Activated naive CD4-positive, alpha-beta T cell treated with anti-CD3 and anti-CD28 coated beads for 36 hours (primary cell): ENCODE measurements at regions of chr17 and their contacts with region 1.

Region 1: GRCh38 chr17:7484067-7484918 is at the start of gene POLR2A:
- DNase-seq: peak; percentile 95
- H3K4me3 Mint-ChIP-seq: peak within 1 kb of the TSS; percentile 93
- H3K27ac Mint-ChIP-seq: peak within 1 kb of the TSS; percentile 100
- H3K4me1 Mint-ChIP-seq: peaks cover 70% of the 10 kb centered on the region
- H3K27me3 Mint-ChIP-seq: no peaks in the 10 kb centered on the region
- total RNA-seq, gene POLR2A: 204 to 205 TPM

Region 2: DNA sequence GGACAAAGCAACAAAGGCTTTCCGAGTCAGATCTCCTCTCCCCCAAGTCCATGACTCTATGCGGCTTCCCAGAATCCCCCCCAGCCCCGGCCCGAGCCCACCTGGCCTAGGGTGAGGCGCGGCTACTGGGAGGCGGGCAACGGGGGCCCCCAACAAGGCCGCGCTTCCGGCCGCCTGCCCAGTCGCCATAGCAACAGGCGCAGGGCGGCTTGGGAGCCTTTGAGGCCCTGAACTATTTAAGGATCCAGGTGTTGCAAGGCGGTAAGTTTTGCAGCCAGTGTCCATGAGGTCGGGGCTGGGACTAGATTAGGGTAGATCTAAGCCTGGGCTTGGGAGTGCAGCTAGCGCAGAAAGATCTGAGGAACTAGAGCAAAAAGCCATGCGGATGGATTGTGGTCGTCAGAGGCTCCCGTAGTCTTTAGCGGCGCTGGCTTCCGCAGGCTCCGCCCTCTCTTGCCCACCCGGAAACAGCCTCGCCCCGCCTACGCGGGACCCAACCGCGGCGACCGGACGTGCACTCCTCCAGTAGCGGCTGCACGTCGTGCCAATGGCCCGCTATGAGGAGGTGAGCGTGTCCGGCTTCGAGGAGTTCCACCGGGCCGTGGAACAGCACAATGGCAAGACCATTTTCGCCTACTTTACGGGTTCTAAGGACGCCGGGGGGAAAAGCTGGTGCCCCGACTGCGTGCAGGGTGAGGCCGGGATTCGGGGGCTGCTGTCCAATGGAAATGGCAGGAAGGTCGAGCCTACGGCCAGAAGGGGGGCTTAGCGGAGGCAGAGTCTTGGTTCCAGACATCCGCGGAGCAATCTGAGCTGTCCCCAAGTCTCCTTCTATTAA is 843.5 kb before region 1 on chr17 and contains the starts of genes KIAA0753 and TXNDC17:
- CTCF ChIA-PET with region 1: no interaction called
- intact Hi-C with region 1: loop called (anchors 5 kb)
- DNase-seq: peak; percentile 93
- H3K4me3 Mint-ChIP-seq: peak within 1 kb of the TSS; percentile 81
- H3K27ac Mint-ChIP-seq: peak within 1 kb of the TSS; percentile 97
- H3K4me1 Mint-ChIP-seq: peaks cover 51% of the 10 kb centered on the region
- H3K27me3 Mint-ChIP-seq: no peaks in the 10 kb centered on the region
- total RNA-seq, gene KIAA0753: 7.7 to 8.1 TPM
- total RNA-seq, gene TXNDC17: 71.4 to 85.8 TPM

Region 3: DNA sequence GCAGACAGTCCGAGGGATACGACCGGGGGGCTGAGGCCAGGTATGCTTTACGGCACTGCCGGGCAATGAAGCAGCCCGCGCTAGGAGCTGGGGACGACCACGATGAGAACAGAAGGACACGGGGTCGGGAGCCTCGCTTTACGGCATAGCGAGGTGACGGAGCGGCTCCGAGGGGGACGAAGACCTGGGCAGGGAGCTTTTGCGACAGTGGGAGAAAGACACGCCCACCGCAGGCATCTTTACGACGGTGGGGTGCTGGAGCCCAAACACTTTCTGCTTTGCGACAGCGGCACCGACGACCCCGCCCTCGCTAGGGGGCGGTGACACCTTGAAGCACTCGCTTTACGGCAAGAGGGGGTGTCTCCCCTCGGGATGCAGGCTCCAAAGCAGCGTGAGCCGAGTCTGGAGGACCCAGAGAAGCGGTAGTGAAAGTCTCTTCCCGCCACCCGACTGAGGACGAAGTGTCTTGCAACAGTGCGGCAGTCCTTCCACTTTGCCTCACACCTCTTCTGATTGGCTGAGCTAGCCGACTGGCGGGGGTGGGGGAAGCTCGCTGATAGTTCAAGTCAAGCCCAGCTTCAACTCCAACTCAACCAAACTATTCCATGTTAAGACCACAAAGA is 154.8 kb before region 1 on chr17:
- CTCF ChIA-PET with region 1: no interaction called
- intact Hi-C with region 1: loop called (anchors 5 kb)
- DNase-seq: peak; percentile 98
- H3K4me3 Mint-ChIP-seq: peak overlapping the region; percentile 97
- H3K27ac Mint-ChIP-seq: peak overlapping the region; percentile 91
- H3K4me1 Mint-ChIP-seq: peaks cover 54% of the 10 kb centered on the region
- H3K27me3 Mint-ChIP-seq: no peaks in the 10 kb centered on the region

Region 4: DNA sequence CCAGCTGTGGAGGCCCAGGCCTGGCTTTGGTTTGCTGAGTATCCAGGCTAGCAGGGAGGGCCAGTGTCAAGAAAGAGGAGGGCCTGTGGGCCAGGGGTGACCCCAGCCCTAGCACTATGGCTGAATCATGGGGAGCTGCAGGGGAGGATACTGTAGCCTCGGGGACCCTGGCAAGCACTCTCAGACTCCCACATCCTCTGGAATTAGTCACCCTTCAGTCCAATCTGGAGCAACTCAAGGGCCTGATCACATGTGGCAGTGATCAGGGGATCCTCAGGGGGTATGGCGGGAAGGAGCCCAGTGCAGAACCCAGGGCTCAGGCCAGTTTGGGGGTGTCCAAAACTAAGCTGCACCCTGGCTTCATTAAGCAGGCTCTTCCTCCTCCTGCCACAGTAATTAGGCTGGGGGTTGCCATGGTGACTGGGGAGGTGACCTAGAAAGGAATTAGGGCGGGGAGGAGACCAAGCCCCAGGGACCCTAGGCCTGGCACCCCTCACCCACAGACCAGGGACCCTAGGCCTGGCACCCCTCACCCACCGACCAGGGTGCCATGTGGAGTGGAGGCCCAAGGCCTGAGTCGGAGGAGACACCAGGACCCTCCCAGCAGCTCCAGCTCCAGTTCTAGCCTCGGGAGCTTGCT is 70.8 kb before region 1 on chr17:
- CTCF ChIA-PET with region 1: no interaction called
- intact Hi-C with region 1: no loop called
- DNase-seq: no peak
- H3K4me3 Mint-ChIP-seq: no peak overlapping the region
- H3K27ac Mint-ChIP-seq: no peak overlapping the region
- H3K4me1 Mint-ChIP-seq: no peaks in the 10 kb centered on the region
- H3K27me3 Mint-ChIP-seq: no peaks in the 10 kb centered on the region

Region 5: GRCh38 chr17:7454980-7455379 is 29.3 kb before region 1 on chr17:
- CTCF ChIA-PET with region 1: interaction called, 4 read pairs
- intact Hi-C with region 1: loop called (anchors 1 kb)
- DNase-seq: no peak
- H3K4me3 Mint-ChIP-seq: peak overlapping the region; percentile 84
- H3K27ac Mint-ChIP-seq: peak overlapping the region; percentile 83
- H3K4me1 Mint-ChIP-seq: peaks cover 17% of the 10 kb centered on the region
- H3K27me3 Mint-ChIP-seq: no peaks in the 10 kb centered on the region

Region 6: DNA sequence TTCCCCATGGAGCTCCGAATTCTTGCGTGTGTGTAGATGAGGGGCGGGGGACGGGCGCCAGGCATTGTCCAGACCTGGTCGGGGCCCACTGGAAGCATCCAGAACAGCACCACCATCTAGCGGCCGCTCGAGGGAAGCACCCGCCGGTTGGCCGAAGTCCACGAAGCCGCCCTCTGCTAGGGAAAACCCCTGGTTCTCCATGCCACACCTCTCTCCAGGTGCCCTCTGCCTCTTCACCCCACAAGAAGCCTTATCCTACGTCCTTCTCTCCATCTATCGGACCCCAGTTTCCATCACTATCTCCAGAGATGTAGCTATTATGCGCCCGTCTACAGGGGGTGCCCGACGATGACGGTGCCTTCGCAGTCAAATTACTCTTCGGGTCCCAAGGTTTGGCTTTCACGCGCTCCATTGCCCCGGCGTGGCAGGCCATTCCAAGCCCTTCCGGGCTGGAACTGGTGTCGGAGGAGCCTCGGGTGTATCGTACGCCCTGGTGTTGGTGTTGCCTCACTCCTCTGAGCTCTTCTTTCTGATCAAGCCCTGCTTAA is 76.8 kb after region 1 on chr17:
- CTCF ChIA-PET with region 1: interaction called, 16 read pairs
- intact Hi-C with region 1: loop called (anchors 1 kb)
- DNase-seq: peak; percentile 89
- H3K4me3 Mint-ChIP-seq: peak overlapping the region; percentile 87
- H3K27ac Mint-ChIP-seq: peak overlapping the region; percentile 84
- H3K4me1 Mint-ChIP-seq: peaks cover 57% of the 10 kb centered on the region
- H3K27me3 Mint-ChIP-seq: no peaks in the 10 kb centered on the region

Region 7: GRCh38 chr17:7782237-7782636 is 297.9 kb after region 1 on chr17:
- CTCF ChIA-PET with region 1: no interaction called
- intact Hi-C with region 1: no loop called
- DNase-seq: no peak
- H3K4me3 Mint-ChIP-seq: no peak overlapping the region
- H3K27ac Mint-ChIP-seq: no peak overlapping the region
- H3K4me1 Mint-ChIP-seq: no peaks in the 10 kb centered on the region
- H3K27me3 Mint-ChIP-seq: peaks cover 2% of the 10 kb centered on the region

Region 8: GRCh38 chr17:7834962-7835813 is 350.9 kb after region 1 on chr17:
- CTCF ChIA-PET with region 1: no interaction called
- intact Hi-C with region 1: loop called (anchors 2 kb)
- DNase-seq: peak; percentile 94
- H3K4me3 Mint-ChIP-seq: peak overlapping the region; percentile 93
- H3K27ac Mint-ChIP-seq: peak overlapping the region; percentile 94
- H3K4me1 Mint-ChIP-seq: peaks cover 44% of the 10 kb centered on the region
- H3K27me3 Mint-ChIP-seq: no peaks in the 10 kb centered on the region

Region 9: DNA sequence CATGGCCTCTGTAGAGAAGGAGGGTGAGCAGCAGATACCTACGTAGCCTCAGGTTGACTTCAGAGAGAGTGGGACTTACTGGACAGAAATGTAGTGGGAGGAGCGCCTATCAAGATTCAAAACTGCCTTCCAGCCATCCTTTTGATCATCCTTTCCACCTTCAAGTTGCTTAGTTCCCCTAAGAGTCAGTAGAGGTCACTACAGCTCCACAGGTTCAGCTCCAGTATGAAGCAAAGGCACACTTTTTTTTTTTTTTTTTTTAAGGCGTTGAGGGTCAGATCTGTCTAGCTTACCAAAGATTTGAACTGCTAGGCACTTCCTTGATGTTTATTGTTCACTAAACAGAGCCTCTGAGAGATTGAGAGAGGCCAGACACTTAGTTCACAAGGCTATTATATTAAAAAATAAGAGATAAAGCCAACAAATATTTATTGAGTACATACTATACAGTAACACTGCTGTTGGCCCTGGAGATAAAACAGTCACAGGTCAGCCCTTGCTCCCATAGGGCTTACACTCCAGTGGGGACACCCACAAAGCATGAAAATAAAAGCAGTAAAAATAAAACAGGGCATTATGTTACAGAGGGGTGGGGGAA is 428.7 kb after region 1 on chr17:
- CTCF ChIA-PET with region 1: no interaction called
- intact Hi-C with region 1: no loop called
- DNase-seq: peak; percentile 63
- H3K4me3 Mint-ChIP-seq: no peak overlapping the region
- H3K27ac Mint-ChIP-seq: peak overlapping the region; percentile 65
- H3K4me1 Mint-ChIP-seq: peaks cover 29% of the 10 kb centered on the region
- H3K27me3 Mint-ChIP-seq: no peaks in the 10 kb centered on the region

Region 10: DNA sequence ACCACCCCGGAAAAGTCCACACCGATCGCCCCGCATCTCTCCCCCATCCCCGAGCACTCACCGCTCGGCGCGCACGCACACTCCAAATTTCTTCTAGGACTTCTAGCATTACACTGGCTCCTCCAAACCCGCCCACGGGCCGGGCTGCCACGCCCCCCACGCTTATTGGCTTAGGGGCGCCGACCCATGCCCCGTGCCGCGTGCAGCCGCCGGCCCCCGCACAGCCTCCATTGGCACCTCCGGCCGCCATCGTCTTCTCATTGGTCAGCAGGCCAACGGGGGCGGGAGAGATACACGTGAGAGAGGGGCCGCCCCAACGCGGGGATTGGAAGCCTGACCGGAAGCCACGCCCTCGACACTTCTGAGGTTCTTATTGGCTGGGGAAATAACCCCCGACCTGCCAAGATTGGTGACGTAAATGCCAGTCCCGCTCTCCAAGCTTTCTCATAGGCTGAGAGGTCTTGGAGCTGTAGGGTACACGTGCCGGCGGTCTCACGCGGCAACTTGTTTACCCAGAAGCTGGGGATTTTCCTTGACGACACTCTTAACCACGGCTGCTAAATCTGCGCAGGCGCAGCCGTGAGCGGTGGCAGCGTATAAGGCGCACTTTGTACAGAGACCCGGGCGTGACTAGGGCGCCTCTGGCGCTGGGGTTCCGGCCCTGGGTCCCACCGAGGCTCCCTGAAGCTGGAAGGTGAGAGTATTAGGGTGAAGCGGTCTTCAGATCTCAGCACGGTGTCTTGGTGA is 672.1 kb after region 1 on chr17:
- CTCF ChIA-PET with region 1: no interaction called
- intact Hi-C with region 1: loop called (anchors 10 kb)
- DNase-seq: peak; percentile 100
- H3K4me3 Mint-ChIP-seq: no peak overlapping the region
- H3K27ac Mint-ChIP-seq: no peak overlapping the region
- H3K4me1 Mint-ChIP-seq: peaks cover 62% of the 10 kb centered on the region
- H3K27me3 Mint-ChIP-seq: no peaks in the 10 kb centered on the region